ENCODE measurements at regions of chr4 and their contacts with region 1.

Region 1: DNA sequence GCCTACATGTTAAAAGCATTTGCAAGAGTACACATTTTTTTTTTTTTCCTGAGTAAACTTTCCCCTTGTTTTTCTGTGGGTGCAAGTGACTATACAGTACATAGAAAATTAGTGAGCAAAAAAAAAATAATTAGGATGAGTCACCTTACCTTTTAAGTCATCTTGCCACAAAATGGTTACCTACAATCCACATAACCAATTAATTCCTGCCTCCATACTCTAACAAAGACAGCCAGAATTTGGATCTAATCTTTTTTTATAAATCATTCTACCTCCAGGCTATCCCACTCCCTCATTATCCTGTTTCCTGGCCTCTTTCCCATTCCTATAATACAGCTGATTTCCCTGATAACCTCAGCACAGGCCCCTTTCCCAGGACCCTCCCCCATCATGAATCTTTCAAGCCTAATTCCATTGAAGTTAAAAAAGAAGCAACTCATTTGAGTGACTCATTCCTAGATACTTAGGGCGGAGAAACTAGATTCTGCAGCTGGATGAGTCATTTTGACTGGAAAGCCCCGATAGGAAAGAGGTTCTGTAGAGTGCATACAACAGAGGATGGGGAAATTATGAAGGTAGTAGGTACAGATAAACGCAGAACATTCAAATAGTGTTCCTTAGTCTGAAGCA is 128.2 kb downstream of the C4orf51 start:
- DNase-seq: peak; percentile 56
- H3K4me3 Mint-ChIP-seq: peak overlapping the region; percentile 49
- H3K27ac Mint-ChIP-seq: peak overlapping the region; percentile 96
- H3K4me1 Mint-ChIP-seq: peaks cover 47% of the 10 kb centered on the region
- H3K27me3 Mint-ChIP-seq: no peaks in the 10 kb centered on the region

Region 2: DNA sequence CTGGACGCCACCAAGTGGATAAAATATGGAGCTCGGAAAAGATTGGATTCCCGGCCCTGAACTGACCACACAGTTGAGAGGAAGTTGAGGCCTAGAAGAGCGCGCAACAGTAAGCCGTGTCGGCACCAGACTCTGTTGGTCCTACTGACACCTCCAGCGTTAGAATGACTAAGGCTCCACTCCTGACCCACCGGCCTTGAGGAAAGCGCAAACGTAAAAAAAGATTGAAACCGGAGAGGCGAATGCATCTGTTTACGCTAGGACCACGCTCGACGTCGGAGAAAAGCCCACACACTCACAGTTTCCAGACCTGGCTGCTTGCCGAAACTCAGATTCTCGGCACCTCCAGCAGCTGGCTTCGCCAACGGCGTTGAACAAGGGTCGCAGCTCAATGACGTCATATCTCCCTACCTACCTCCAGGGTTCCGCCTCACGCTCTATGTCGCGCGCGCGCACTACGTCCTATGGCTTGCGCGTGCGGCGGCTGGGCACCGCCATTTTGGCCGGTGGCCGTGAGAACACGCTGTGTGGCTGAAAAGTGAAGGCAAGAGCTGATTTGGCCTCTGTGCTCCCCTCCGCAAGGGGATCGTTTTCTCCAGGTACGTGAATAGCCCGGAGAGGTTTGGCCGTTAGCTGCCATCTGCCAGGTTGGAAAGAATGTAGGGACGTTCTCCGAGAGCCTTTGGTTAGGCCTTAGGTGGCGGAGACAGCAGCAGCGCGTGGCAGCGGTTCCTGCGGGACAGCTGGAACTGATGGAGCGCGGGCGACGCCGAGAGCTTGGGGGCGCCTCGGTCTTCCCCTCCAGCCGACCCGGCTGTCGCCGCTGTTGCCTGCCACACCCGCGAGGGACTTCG is 710.1 kb before region 1 on chr4 and contains the starts of genes ABCE1 and ANAPC10:
- intact Hi-C with region 1: loop called (anchors 1 kb)
- DNase-seq: peak; percentile 94
- H3K4me3 Mint-ChIP-seq: peak within 1 kb of the TSS; percentile 92
- H3K27ac Mint-ChIP-seq: peak within 1 kb of the TSS; percentile 100
- H3K4me1 Mint-ChIP-seq: peaks cover 27% of the 10 kb centered on the region
- H3K27me3 Mint-ChIP-seq: no peaks in the 10 kb centered on the region
- total RNA-seq, gene ABCE1: 155 and 176 TPM in 2 replicates
- total RNA-seq, gene ANAPC10: 25.4 and 32.1 TPM in 2 replicates

Region 3: DNA sequence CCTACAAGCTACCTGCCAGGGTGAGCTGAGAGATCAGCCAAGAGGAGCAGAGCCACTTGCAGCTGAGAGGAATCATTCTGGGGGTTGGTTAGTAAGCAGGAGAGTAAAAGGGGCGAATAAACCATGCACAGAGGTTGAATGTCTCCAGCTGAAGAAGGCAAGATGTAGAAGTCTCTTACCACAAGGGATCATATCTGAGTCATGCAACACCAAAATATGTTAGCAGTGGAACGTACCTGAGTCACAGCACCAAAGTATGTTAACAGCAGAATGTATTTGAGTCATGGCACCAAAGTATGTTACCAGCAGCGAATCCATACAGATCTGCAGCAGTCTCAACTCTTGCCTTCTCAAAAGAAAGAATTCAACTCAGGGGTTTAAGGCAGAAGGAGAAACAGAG is 98.3 kb before region 1 on chr4:
- intact Hi-C with region 1: loop called (anchors 1 kb)
- DNase-seq: no peak
- H3K4me3 Mint-ChIP-seq: no peak overlapping the region
- H3K27ac Mint-ChIP-seq: peak overlapping the region; percentile 33
- H3K4me1 Mint-ChIP-seq: peaks cover 19% of the 10 kb centered on the region
- H3K27me3 Mint-ChIP-seq: no peaks in the 10 kb centered on the region

Region 4: GRCh38 chr4:145732895-145733880 is 74.9 kb before region 1 on chr4:
- intact Hi-C with region 1: loop called (anchors 2 kb)
- DNase-seq: peak; percentile 82
- H3K4me3 Mint-ChIP-seq: peak overlapping the region; percentile 79
- H3K27ac Mint-ChIP-seq: peak overlapping the region; percentile 24
- H3K4me1 Mint-ChIP-seq: peaks cover 10% of the 10 kb centered on the region
- H3K27me3 Mint-ChIP-seq: peaks cover 3% of the 10 kb centered on the region

Region 5: DNA sequence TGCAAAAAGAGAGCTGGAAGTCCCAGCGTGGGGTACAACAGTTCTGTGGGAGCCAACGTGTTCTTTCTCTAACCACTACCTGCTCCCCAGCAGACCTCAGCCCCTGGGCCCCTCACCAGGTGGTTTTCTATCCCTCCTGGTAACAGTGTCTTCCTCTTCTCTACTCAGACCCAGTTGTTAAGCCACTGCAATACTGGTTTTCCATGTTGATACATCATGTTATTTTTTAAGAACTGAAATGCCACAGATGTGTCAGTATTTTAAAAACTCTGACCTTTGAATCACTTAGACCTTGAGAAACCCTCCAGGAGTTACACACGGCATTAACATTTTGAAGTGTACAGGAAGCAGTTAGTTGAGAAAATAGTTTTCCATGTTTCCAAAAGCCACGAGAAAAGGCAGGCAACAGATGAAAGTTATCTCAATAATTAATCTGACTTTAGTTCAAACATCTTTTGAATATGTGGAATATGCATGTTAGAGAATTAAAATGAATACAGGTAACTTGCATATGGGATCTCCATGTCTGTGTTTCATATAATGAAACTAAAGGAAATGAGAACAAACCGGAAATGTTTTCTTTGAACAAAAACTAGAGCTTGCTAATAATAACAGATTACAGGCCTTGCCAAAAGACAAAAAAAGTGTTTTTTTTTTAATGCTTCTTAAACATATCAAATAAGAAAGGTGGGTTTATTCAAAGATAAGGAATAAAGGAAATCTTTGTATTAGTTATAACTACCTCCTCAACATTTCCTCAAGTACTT is 21.7 kb after region 1 on chr4:
- intact Hi-C with region 1: loop called (anchors 1 kb)
- DNase-seq: no peak
- H3K4me3 Mint-ChIP-seq: peak overlapping the region; percentile 63
- H3K27ac Mint-ChIP-seq: peak overlapping the region; percentile 91
- H3K4me1 Mint-ChIP-seq: peaks cover 61% of the 10 kb centered on the region
- H3K27me3 Mint-ChIP-seq: no peaks in the 10 kb centered on the region

Region 6: GRCh38 chr4:146132445-146132844 is 324.3 kb after region 1 on chr4:
- intact Hi-C with region 1: loop called (anchors 1 kb)
- DNase-seq: peak; percentile 28
- H3K4me3 Mint-ChIP-seq: no peak overlapping the region
- H3K27ac Mint-ChIP-seq: peak overlapping the region; percentile 61
- H3K4me1 Mint-ChIP-seq: peaks cover 20% of the 10 kb centered on the region
- H3K27me3 Mint-ChIP-seq: peaks cover 8% of the 10 kb centered on the region

Region 7: GRCh38 chr4:146450524-146450923 is 642.4 kb after region 1 on chr4:
- intact Hi-C with region 1: loop called (anchors 2 kb)
- DNase-seq: no peak
- H3K4me3 Mint-ChIP-seq: peak overlapping the region; percentile 38
- H3K27ac Mint-ChIP-seq: peak overlapping the region; percentile 68
- H3K4me1 Mint-ChIP-seq: peaks cover 40% of the 10 kb centered on the region
- H3K27me3 Mint-ChIP-seq: no peaks in the 10 kb centered on the region

Region 8: DNA sequence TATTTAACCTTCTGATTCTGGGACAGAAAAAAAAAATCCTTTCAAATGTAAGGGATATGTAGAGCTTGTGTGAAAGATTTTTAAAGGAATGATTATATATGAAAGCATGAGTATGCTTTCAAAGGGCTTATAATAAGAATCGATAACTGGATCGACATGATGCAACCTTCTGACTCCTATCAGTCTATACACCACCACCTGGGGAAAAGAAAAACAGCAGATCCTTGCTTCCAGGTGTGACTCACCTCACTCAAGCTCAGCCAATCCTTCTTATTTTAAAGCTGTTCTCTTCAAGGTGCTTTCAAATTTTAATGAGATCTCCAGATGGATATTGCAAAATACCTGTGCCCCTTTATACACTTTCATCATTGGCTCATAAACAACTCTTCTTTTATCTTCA is 1570.6 kb after region 1 on chr4:
- intact Hi-C with region 1: no loop called
- DNase-seq: no peak
- H3K4me3 Mint-ChIP-seq: no peak overlapping the region
- H3K27ac Mint-ChIP-seq: no peak overlapping the region
- H3K4me1 Mint-ChIP-seq: no peaks in the 10 kb centered on the region
- H3K27me3 Mint-ChIP-seq: no peaks in the 10 kb centered on the region